ENCODE measurements at regions of chr2 and their contacts with region 1.

Region 1: DNA sequence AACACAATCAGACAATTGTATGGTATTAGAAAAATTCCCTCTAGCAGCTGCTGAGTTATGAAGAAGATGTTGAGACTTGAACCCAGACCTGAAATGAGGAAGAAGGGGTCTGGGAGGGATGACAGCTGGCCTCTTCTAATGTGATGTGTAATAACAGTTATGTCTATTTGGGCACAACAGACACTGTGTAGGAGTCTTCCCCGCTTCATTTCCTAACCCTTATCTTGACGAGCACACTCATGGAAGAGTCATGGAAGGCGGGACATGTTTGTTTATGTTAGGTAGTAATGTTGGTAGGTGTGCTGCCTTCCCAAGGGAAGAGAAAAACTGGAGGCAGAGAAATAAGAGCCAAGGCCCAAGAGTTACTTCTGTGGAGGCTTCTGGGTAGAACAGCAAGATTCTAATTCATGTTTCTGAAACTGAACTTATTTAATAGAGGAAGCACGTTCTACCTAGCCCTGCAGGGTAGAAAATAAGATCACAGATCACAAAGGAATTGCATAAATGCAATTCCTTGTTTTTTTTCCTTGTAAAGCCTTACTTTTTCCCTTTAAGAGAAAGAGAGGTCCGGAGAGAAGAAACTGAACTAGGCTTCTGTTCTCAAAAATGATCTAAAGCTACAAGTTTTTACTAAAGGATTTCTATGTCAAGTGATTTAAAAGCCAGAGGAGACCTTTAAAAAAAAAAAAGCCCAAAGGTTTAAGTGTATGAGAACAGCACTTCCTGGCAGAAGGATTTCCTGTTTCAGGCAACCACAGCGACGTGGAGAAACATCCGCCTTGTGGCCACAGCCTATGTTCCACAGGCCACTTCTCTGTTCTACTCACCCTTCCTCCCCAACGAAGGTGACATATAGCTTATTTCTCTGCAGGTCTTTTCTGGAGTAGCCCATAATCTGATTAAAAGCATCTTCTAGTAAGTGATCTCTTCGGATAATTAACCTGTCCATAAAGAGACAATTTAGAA is 68.5 kb upstream of the STK17B start:
- DNase-seq: peak; percentile 84
- H3K4me3 ChIP-seq: no peak overlapping the region
- H3K27ac ChIP-seq: peak overlapping the region; percentile 80
- H3K4me1 ChIP-seq: peaks cover 35% of the 10 kb centered on the region
- H3K27me3 ChIP-seq: no peaks in the 10 kb centered on the region
- CTCF ChIP-seq: peak in 1 of 2 donors; percentile 22
- POLR2A ChIP-seq: peak; percentile 21

Region 2: GRCh38 chr2:195937176-195937575 is 302.7 kb before region 1 on chr2:
- CTCF ChIA-PET with region 1: no interaction called
- POLR2A ChIA-PET with region 1: no interaction called
- dilution Hi-C with region 1: no loop called
- intact Hi-C with region 1: no loop called
- DNase-seq: no peak
- H3K4me3 ChIP-seq: no peak overlapping the region
- H3K27ac ChIP-seq: no peak overlapping the region
- H3K4me1 ChIP-seq: no peaks in the 10 kb centered on the region
- H3K27me3 ChIP-seq: peaks cover 0 to 5% of the 10 kb centered on the region in 2 experiments
- CTCF ChIP-seq: no peak
- POLR2A ChIP-seq: no peak

Region 3: DNA sequence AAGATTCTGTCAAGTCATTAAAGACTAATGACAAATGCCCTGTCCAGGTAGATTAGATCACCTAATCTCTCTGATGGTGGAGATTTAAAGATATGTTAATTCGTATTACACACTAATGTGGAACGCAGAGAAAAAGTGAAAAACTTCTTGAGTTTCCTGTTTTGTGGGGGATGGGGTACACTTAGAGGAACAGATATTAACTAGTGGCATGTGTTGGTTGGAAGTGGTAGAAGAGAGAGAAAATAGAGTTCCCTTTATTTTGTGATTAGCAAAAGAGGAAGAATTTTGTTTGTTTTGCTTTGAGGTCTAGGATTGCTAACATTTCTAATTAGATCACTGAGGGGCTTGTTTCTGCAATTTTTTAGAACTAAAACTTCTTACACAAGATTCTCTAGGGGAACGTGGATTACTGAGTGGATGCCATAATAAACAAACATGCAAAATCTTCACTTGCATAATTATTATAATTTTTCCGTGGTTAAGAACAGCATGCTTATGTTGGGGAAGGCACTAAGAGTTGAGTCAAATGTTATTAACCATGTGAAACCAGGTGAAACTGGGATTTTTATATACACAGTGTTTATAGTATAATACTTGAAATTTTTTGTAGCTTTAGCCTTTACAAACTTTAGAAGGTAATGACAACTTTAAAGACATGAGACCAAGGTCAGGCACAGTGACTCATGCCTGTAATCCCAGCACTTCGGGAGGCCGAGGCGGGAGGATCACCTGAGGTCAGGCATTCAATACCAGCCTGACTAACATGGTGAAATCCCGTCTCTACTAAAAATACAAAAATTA is 28.8 kb after region 1 on chr2:
- CTCF ChIA-PET with region 1: interaction called, 4 read pairs
- POLR2A ChIA-PET with region 1: no interaction called
- dilution Hi-C with region 1: no loop called
- intact Hi-C with region 1: loop called (anchors 2 kb)
- DNase-seq: no peak
- H3K4me3 ChIP-seq: no peak overlapping the region
- H3K27ac ChIP-seq: peak overlapping the region; percentile 71
- H3K4me1 ChIP-seq: peaks cover 54% of the 10 kb centered on the region
- H3K27me3 ChIP-seq: no peaks in the 10 kb centered on the region
- CTCF ChIP-seq: no peak
- POLR2A ChIP-seq: no peak

Region 4: GRCh38 chr2:196277002-196277401 is 37.1 kb after region 1 on chr2:
- CTCF ChIA-PET with region 1: interaction called, 5 read pairs
- POLR2A ChIA-PET with region 1: no interaction called
- dilution Hi-C with region 1: no loop called
- intact Hi-C with region 1: loop called (anchors 1 kb)
- DNase-seq: peak; percentile 46
- H3K4me3 ChIP-seq: peak overlapping the region in 2 of 3 experiments; percentile 38 to 60
- H3K27ac ChIP-seq: peak overlapping the region; percentile 14
- H3K4me1 ChIP-seq: peaks cover 58% of the 10 kb centered on the region
- H3K27me3 ChIP-seq: no peaks in the 10 kb centered on the region
- CTCF ChIP-seq: peak; percentile 32 to 41
- POLR2A ChIP-seq: no peak

Region 5: GRCh38 chr2:197130318-197130717 is 890.4 kb after region 1 on chr2:
- CTCF ChIA-PET with region 1: no interaction called
- POLR2A ChIA-PET with region 1: no interaction called
- dilution Hi-C with region 1: no loop called
- intact Hi-C with region 1: no loop called
- DNase-seq: no peak
- H3K4me3 ChIP-seq: no peak overlapping the region
- H3K27ac ChIP-seq: no peak overlapping the region
- H3K4me1 ChIP-seq: no peaks in the 10 kb centered on the region
- H3K27me3 ChIP-seq: no peaks in the 10 kb centered on the region
- CTCF ChIP-seq: no peak
- POLR2A ChIP-seq: no peak